PC-9 (cell line): ENCODE measurements at regions of chr13 and their contacts with region 1.

Region 1: GRCh38 chr13:24244802-24245201 is 64.6 kb upstream of the C1QTNF9 start:
- DNase-seq: no peak
- H3K4me3 ChIP-seq: no peak overlapping the region
- H3K27ac ChIP-seq: no peak overlapping the region
- H3K4me1 ChIP-seq: no peaks in the 10 kb centered on the region
- H3K27me3 ChIP-seq: no peaks in the 10 kb centered on the region
- CTCF ChIP-seq: no peak

Region 2: DNA sequence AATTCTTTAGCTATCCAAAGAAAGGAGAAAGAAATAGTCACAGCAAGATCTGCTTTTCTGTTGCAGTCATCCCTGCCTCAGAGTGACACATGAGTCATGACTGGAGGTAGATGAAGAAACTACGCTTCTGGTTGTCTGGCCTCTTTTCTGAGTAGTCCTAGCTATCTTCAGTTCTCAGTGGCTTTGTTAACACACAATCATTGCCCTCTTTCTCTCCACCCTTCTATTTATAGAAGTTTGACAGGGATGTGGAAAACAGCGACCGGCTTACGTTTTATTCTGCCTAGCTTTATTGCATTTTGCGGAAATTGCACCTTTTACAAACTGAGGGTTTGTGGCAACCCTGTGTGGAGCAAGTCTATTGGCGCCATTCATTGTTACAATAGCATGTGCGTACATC is 57.6 kb before region 1 on chr13:
- CTCF ChIA-PET with region 1: interaction called, 10 read pairs
- POLR2A ChIA-PET with region 1: no interaction called
- intact Hi-C with region 1: no loop called
- DNase-seq: no peak
- H3K4me3 ChIP-seq: no peak overlapping the region
- H3K27ac ChIP-seq: no peak overlapping the region
- H3K4me1 ChIP-seq: no peaks in the 10 kb centered on the region
- H3K27me3 ChIP-seq: no peaks in the 10 kb centered on the region
- CTCF ChIP-seq: no peak

Region 3: GRCh38 chr13:24270639-24271141 is 25.9 kb after region 1 on chr13:
- CTCF ChIA-PET with region 1: no interaction called
- POLR2A ChIA-PET with region 1: no interaction called
- intact Hi-C with region 1: no loop called
- DNase-seq: peak in 1 of 2 experiments; percentile 7
- H3K4me3 ChIP-seq: no peak overlapping the region
- H3K27ac ChIP-seq: no peak overlapping the region
- H3K4me1 ChIP-seq: no peaks in the 10 kb centered on the region
- H3K27me3 ChIP-seq: no peaks in the 10 kb centered on the region
- CTCF ChIP-seq: no peak

Region 4: GRCh38 chr13:24341439-24341838 is 96.6 kb after region 1 on chr13:
- CTCF ChIA-PET with region 1: no interaction called
- POLR2A ChIA-PET with region 1: no interaction called
- intact Hi-C with region 1: no loop called
- DNase-seq: no peak
- H3K4me3 ChIP-seq: no peak overlapping the region
- H3K27ac ChIP-seq: no peak overlapping the region
- H3K4me1 ChIP-seq: no peaks in the 10 kb centered on the region
- H3K27me3 ChIP-seq: no peaks in the 10 kb centered on the region
- CTCF ChIP-seq: no peak